ENCODE measurements at regions of chr1 and their contacts with region 1.

Region 1: DNA sequence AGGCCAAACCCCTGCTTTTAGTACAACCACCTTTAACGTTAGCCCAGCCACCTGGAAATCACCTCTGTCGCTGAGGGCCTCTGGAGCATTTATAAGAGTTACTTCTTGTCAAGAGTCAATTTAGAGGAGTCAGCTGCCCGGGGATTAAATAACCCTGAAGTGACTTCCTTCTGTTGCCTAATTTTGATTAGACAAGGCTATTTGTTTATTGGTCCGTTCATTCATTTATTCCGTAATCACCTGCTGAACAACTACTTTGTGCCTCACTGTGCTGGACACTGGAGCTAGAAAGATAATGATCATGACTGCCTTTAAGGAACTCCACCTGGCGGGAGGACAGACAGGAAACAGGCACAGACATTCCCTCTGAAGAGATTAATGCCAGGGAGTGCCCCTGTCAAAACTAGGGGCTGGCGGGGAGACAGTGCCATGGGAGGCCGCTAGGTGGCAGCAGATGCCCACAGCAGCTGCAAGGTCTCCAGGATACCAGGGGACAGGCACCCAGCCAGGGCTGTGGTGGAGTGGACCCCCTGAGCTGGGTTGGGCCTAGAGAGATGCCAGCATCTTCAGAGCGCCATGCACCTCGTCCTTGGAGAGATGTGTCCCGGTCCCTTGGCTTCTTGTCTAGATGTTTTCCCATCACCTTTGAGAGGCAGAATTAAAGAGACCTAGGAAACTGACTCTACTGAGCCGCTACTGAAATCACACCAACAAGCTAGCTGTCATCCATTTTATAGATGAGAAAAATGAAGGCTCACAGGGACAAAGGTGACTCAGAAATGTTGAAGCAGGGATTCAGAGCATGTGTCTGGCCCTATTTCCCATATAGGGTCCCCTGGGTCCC is 3.7 kb downstream of the REN start:
- DNase-seq: peak; percentile 91
- H3K4me3 ChIP-seq: peak overlapping the region in 1 of 2 experiments; percentile 20; a peak in 1 of 4 replicates
- H3K27ac ChIP-seq: no peak overlapping the region
- H3K4me1 ChIP-seq: no peaks in the 10 kb centered on the region; a peak in 1 of 4 replicates
- H3K27me3 ChIP-seq: no peaks in the 10 kb centered on the region; the same call in 1 of the 2 replicates
- CTCF ChIP-seq: peak; percentile 98
- EP300 ChIP-seq: no peak
- RAD21 ChIP-seq: peak; percentile 99

Region 2: DNA sequence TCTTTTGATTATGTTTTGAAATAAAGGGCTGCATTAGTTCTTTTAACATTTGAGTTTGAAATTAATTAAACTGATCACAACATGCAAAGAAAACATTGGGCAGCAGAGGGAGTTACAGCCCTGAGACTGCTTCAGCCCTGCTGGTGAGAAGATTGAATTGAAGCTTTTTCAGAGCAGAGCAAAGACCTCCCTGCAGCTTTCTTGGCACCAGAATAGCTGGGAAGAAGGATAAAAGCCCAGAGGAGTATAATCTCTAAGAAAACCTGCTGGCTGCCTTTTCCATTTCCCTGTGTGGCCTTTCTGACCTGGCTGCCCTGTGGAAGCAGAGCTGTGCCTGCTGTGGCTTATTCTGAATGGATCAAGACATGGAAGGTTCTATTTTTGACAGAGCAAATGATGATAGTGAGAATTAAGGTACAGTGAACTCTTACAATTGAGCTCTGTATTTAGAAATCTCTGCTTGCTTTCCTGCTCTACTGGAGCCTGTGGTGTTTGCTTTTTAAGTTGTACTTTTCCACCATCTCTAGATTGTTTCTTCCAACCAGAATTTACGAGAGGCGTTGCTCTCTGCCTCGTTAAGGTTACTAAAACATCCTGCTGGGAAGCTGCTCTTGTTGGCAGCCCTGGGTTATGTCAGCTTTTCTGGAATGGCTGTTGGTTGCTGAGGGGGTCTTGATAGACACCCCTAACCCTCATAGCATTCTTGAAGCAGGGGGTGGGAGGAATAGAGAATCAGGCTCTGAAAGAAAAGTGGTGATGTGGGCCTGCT is 291.2 kb before region 1 on chr1:
- CTCF ChIA-PET with region 1: interaction called, 17 read pairs
- POLR2A ChIA-PET with region 1: no interaction called
- DNase-seq: peak; percentile 70
- H3K4me3 ChIP-seq: no peak overlapping the region; a peak in 1 of 4 replicates
- H3K27ac ChIP-seq: 0 out of 4 replicates have a peak overlapping the region, but pooled peaks of 1 of the 2 experiments have one; percentile 9
- H3K4me1 ChIP-seq: 0 out of 4 replicates have a peak, but pooled peaks cover 0 to 5% of the 10 kb centered on the region in 2 experiments
- H3K27me3 ChIP-seq: no peaks in the 10 kb centered on the region
- CTCF ChIP-seq: peak; percentile 96
- EP300 ChIP-seq: no peak
- RAD21 ChIP-seq: peak; percentile 88

Region 3: GRCh38 chr1:204177133-204177532 is 14.7 kb after region 1 on chr1:
- CTCF ChIA-PET with region 1: interaction called, 33 read pairs
- POLR2A ChIA-PET with region 1: no interaction called
- DNase-seq: no peak
- H3K4me3 ChIP-seq: no peak overlapping the region
- H3K27ac ChIP-seq: no peak overlapping the region
- H3K4me1 ChIP-seq: 0 out of 4 replicates have a peak, but pooled peaks cover 0 to 3% of the 10 kb centered on the region in 2 experiments
- H3K27me3 ChIP-seq: no peaks in the 10 kb centered on the region; the same call in 1 of the 2 replicates
- CTCF ChIP-seq: no peak
- EP300 ChIP-seq: no peak
- RAD21 ChIP-seq: no peak

Region 4: DNA sequence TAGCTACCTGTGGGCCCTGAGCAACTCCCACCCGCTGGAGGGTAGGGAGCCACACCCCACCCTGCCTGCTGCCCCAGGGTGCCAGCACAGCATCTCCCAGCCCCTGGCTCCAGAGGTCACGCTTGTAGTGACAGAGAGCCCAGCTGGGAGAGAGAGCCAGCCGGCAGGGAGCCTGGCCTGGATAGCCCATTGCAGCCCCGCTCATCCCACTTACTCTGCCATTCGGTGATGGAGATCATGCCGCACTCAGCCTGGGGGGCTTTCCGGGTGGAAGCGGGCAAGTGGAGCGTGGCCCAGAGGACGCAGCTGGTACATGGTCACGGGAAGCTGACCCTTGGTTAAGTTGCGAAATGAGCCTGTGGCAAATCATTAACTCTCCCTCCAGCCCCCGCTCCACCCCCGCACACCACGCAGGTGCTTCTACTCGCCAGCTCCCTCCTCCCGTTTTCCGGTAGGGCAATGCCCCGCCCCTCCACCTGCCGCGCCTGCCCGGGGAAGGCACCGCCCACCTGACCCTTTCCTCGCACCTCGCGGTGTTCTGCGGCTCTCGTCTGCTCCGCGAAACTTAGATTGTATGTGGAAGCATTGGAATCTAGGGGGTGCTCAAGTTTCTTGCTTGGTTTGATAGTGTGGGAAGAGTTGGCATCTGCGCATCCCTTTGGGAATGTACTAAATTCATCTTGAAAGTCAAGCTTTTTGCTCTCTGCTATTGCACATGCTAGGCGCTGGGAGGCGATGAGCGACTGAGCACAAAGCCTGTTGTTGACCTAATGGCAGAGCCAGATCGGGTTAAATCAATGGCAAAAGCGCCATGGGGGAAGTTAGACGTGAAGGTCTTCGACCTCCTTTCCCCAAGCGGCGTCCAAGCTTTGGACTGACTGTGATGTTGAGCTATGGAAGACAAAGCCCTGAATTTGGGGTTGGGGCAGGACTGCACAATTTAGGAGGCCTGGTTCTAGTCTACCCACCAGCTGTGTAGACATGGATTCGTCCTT is 51.5 kb after region 1 on chr1 and contains the start of gene GOLT1A:
- CTCF ChIA-PET with region 1: interaction called, 30 read pairs
- POLR2A ChIA-PET with region 1: no interaction called
- DNase-seq: peak; percentile 65
- H3K4me3 ChIP-seq: peak within 1 kb of the TSS in 1 of 2 experiments; percentile 27; a peak in 1 of 4 replicates
- H3K27ac ChIP-seq: no peak within 1 kb of the TSS
- H3K4me1 ChIP-seq: no peaks in the 10 kb centered on the region; a peak in 1 of 4 replicates
- H3K27me3 ChIP-seq: peaks cover 18% of the 10 kb centered on the region; the same call in 1 of the 2 replicates
- CTCF ChIP-seq: peak; percentile 60
- EP300 ChIP-seq: no peak
- RAD21 ChIP-seq: peak; percentile 67
- polyA plus RNA-seq, gene GOLT1A: not detected in 2 replicates

Region 5: DNA sequence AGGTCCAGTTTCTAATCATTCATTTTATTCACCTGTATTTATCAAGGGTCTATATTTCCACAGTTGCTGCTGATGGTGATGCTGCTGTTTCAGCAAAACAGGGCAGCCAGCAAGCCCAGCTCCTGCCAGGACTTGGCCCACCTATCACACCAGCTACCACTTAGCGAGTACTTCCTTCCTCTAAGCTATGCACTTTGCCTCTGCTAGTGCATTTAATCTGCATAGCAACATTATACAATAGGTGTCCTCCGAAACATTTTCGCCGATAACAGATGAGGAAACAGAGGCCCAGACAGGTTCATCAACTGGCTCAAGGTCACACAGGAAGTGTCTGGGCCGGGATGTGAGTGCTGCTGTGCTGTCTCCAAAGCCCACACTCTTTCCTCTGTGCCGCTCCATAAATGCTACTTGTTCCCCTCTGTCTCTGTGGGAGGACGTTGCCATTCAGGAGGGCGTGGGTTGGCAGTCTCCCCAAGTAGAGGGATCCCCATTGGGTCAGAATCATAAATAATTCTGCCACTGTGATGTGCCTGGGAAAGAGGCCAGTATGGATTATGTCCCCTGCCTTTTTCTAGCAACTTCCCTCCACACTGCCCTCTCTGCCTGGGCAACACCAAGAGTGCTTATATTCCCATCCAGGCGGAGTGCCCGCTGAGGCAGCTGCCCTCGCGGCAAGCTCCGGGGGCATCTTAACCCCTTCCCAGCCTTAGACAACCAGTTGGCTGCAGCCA is 206.7 kb after region 1 on chr1:
- CTCF ChIA-PET with region 1: interaction called, 302 read pairs
- POLR2A ChIA-PET with region 1: no interaction called
- DNase-seq: no peak
- H3K4me3 ChIP-seq: no peak overlapping the region
- H3K27ac ChIP-seq: no peak overlapping the region
- H3K4me1 ChIP-seq: no peaks in the 10 kb centered on the region
- H3K27me3 ChIP-seq: peaks cover 23% of the 10 kb centered on the region; the same call in 1 of the 2 replicates
- CTCF ChIP-seq: no peak
- EP300 ChIP-seq: no peak
- RAD21 ChIP-seq: no peak

Region 6: DNA sequence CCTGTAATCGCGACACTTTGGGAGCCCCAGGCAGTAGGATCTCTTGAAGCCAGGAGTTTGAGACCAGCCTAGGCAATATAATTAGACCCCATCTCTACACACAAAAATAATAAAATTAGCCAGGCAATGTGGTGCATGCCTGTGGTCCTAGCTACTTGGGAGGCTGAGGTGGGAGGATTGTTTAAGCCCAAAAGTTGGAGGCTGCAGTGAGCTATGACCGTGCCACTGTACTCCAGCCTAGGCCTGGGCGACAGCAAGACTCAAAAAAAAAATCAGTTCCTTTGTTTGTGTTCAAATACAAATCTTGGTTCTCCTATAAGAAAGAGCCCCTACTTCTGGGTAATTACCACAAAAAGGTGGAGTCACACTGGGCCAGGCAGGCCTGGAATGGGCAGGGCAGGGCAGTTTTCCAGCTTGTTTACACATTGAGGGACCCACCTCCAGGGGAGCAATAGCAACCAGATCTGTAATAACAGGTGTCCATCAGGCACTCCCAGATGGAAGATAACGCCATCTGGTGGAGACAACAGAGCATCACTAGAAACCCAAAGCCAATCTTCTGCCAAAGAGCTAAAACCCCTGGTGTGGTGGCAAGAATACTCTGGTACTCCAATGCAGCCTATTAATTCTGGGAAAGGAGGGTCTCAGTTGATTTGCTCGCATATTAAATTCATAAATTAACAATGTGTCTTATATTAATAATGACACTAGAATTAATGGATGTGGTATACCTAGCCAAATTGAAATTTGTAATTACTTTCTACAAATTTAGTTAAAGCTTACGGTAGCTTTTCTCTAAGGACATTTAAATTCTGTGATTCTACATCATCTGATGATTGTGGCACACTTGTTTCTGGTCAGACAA is 236.0 kb after region 1 on chr1:
- CTCF ChIA-PET with region 1: interaction called, 135 read pairs
- POLR2A ChIA-PET with region 1: interaction called, 4 read pairs
- DNase-seq: peak; percentile 82
- H3K4me3 ChIP-seq: no peak overlapping the region
- H3K27ac ChIP-seq: no peak overlapping the region
- H3K4me1 ChIP-seq: no peaks in the 10 kb centered on the region
- H3K27me3 ChIP-seq: no peaks in the 10 kb centered on the region
- CTCF ChIP-seq: peak; percentile 85
- EP300 ChIP-seq: no peak
- RAD21 ChIP-seq: peak; percentile 79